Spleen (tissue), 13 donors: ENCODE measurements at regions of chr13 and their contacts with region 1.

Region 1: GRCh38 chr13:43804461-43805070 is 17.8 kb upstream of the ENOX1 start:
- DNase-seq: no peak
- H3K4me3 ChIP-seq: no peak overlapping the region
- H3K27ac ChIP-seq: no peak overlapping the region
- H3K4me1 ChIP-seq: peaks cover 0 to 9% (median 2%) of the 10 kb centered on the region in 6 donors
- H3K27me3 ChIP-seq: peaks cover 0 to 4% (median 0%) of the 10 kb centered on the region in 7 donors
- CTCF ChIP-seq: peak in 9 of 11 experiments; percentile 24 to 66 (median 51)
- POLR2A ChIP-seq: no peak

Region 2: GRCh38 chr13:42594970-42595571 is 1209.5 kb before region 1 on chr13:
- intact Hi-C with region 1: loop called (anchors 5 kb)
- DNase-seq: no peak
- H3K4me3 ChIP-seq: no peak overlapping the region
- H3K27ac ChIP-seq: no peak overlapping the region
- H3K4me1 ChIP-seq: peaks cover 0 to 8% (median 0%) of the 10 kb centered on the region in 6 donors
- H3K27me3 ChIP-seq: no peaks in the 10 kb centered on the region
- CTCF ChIP-seq: peak; percentile 48 to 87 (median 73)
- POLR2A ChIP-seq: no peak

Region 3: GRCh38 chr13:43085545-43085944 is 719.0 kb before region 1 on chr13:
- intact Hi-C with region 1: loop called (anchors 5 kb)
- DNase-seq: no peak
- H3K4me3 ChIP-seq: no peak overlapping the region
- H3K27ac ChIP-seq: no peak overlapping the region
- H3K4me1 ChIP-seq: peaks cover 8 to 36% (median 10%) of the 10 kb centered on the region in 6 donors
- H3K27me3 ChIP-seq: no peaks in the 10 kb centered on the region
- CTCF ChIP-seq: peak; percentile 41 to 79 (median 64)
- POLR2A ChIP-seq: no peak

Region 4: GRCh38 chr13:43303033-43303729 is 501.4 kb before region 1 on chr13:
- intact Hi-C with region 1: loop called (anchors 10 kb)
- DNase-seq: no peak
- H3K4me3 ChIP-seq: no peak overlapping the region
- H3K27ac ChIP-seq: no peak overlapping the region
- H3K4me1 ChIP-seq: peaks cover 0 to 11% (median 9%) of the 10 kb centered on the region in 6 donors
- H3K27me3 ChIP-seq: no peaks in the 10 kb centered on the region
- CTCF ChIP-seq: peak in 5 of 11 experiments; percentile 24 to 31 (median 27)
- POLR2A ChIP-seq: no peak

Region 5: DNA sequence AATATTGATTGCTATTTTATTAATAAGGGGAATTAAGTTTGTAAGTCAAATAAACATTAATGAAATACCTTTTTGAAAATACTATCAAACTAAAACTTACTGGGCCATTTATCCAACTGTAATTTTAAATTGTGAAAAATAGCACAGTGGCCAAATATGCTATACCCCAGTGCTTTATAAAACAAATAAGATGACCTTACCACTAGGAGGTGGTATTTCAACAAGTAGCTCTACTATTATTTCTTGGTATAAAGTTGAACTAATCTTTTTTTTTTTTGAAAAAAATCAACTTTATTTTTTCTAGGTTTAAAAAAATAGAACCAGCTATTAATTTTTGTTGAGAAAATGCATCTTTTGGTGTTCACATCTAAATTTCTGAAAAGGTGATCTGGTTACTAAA is 89.9 kb after region 1 on chr13:
- intact Hi-C with region 1: no loop called
- DNase-seq: no peak
- H3K4me3 ChIP-seq: no peak overlapping the region
- H3K27ac ChIP-seq: no peak overlapping the region
- H3K4me1 ChIP-seq: no peaks in the 10 kb centered on the region
- H3K27me3 ChIP-seq: no peaks in the 10 kb centered on the region
- CTCF ChIP-seq: peak in 1 of 11 experiments; percentile 8
- POLR2A ChIP-seq: no peak

Region 6: DNA sequence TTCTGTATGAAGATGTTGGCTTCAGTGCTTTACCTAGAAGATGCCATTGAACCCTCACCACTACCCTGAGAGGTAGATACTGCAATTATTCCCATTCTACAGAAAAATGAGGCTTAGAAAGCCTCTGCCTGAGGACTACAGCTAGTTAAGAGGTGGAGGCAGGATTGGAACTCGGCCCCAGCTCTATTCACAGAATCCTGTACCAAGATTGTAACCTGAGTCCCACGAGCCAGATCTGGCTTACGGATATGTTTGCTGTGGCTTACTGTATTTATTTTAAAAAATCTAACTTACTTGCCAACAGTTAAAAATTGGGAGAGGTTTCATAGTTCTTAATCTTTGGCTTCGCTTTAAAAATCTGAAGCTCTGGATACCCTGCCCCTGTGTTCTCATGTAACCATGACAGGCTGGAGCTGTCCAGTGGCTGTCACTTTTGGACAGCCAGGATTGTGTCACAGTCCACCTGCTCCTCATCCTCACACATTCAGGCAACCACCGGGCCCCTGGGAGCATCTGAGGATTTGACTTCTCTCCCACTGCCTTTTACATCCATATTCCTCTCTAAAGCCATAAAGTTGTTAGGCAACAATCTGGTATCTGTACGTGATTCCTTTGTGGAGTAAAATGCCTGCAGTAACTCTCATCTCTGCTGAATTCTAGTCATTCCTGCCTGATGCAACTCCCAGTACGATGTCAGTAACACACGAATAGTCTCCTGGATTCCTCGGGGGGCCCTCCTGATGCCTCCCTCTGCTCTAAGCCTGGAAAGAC is 408.3 kb after region 1 on chr13:
- intact Hi-C with region 1: no loop called
- DNase-seq: no peak
- H3K4me3 ChIP-seq: no peak overlapping the region
- H3K27ac ChIP-seq: no peak overlapping the region
- H3K4me1 ChIP-seq: no peaks in the 10 kb centered on the region
- H3K27me3 ChIP-seq: no peaks in the 10 kb centered on the region
- CTCF ChIP-seq: no peak
- POLR2A ChIP-seq: no peak